ENCODE measurements at regions of chr6 and their contacts with region 1.

Region 1: GRCh38 chr6:90230548-90231215 is 66.0 kb downstream of the BACH2 start:
- DNase-seq: no peak
- H3K4me3 ChIP-seq: no peak overlapping the region
- H3K27ac ChIP-seq: peak overlapping the region; percentile 10 to 76 (median 56)
- H3K4me1 ChIP-seq: peaks cover 18 to 69% (median 34%) of the 10 kb centered on the region in 6 donors
- H3K27me3 ChIP-seq: no peaks in the 10 kb centered on the region
- CTCF ChIP-seq: no peak
- POLR2A ChIP-seq: no peak

Region 2: GRCh38 chr6:90285611-90286381 is 55.1 kb after region 1 on chr6:
- intact Hi-C with region 1: loop called (anchors 10 kb)
- DNase-seq: peak; percentile 91
- H3K4me3 ChIP-seq: peak overlapping the region in 7 of 8 donors; percentile 3 to 61 (median 25)
- H3K27ac ChIP-seq: peak overlapping the region; percentile 10 to 86 (median 76)
- H3K4me1 ChIP-seq: peaks cover 26 to 94% (median 40%) of the 10 kb centered on the region in 6 donors
- H3K27me3 ChIP-seq: no peaks in the 10 kb centered on the region
- CTCF ChIP-seq: no peak
- POLR2A ChIP-seq: peak in 1 of 3 donors; percentile 46

Measured in spleen (tissue), 13 donors.